Activated T-helper 2 cell treated with anti-CD3 and anti-CD28 coated beads, Interferon-gamma antibody, Interleukin-2, Interleukin-4, amounts not matched to agents 10 μg/mL and 5 μg/mL and 100 μg/mL, durations not matched to agents 14 hours and 24 hours and 36 hours (primary cell): ENCODE measurements at regions of chr5 and their contacts with region 1.

Region 1: DNA sequence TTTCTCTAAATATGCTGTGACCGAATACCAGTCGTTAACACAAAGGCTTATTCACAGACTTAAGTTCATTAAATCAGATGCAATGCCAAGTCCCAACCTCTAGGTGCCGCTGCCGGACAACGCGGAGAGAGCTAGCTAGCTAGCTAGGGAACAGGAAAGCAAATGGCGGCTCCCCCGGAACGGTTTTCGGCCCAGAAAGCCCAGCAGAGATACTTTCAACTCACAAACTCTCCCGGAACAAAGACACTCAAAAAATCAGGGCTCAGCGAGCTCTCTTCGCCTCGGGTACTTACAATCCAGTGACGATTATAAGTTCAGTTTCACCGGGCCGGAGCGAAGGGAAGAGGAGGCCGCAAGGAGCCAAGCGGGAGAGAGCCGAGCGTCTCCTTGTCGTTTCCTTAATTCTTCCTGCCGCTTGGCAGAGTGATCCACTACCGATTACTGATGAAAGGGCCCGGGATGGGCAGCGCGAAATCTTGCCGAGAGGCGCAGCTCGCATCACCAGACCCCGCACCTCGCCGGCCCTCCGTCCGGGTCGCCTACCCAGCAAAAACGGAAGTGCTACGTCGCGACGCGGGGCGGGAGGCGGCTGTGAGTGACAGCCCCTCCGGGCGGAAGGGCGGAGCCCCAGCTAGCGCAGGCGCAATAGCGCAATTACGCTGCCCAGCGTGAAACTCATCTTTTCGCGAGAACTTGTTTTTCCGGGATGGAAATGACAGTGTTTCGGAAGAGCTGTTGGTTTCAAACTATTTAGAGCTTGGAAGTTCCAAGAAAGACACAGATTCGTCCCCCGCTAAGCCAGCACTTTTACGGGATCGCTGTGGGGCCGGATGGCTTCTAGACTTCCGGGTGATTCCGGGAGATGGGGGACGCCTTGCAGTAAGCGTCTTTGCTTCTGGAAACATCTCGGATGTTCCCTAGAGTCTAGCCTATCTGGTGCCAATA is at the start of gene TAF7:
- DNase-seq: peak; percentile 91
- H3K4me3 Mint-ChIP-seq: peak within 1 kb of the TSS; percentile 94
- H3K27ac Mint-ChIP-seq: peak within 1 kb of the TSS; percentile 97
- H3K4me1 Mint-ChIP-seq: peaks cover 14% of the 10 kb centered on the region
- H3K27me3 Mint-ChIP-seq: peaks cover 1% of the 10 kb centered on the region
- total RNA-seq, gene TAF7: 67.1 and 70.5 TPM in 2 replicates

Region 2: DNA sequence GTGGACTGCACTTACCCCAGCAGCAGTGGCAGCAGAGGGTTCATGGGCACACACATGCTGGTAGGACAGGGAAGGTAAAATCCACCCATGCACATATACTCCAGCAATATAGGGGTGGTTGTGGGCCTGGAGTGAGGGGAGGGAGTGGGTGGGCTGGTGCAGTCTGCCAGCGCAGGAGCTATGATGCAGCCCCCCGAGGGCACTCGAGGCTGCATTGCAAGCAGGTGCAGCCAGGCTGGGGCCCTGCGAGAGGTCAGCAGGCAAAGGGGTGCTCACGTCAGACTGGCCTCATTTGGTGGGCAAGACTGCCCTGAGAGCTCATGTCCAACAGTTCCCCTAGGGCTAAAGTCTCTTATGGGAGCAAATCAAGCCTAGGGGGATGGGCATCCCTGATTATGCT is 566.9 kb before region 1 on chr5:
- intact Hi-C with region 1: no loop called
- DNase-seq: no peak
- H3K4me3 Mint-ChIP-seq: no peak overlapping the region
- H3K27ac Mint-ChIP-seq: no peak overlapping the region
- H3K4me1 Mint-ChIP-seq: no peaks in the 10 kb centered on the region
- H3K27me3 Mint-ChIP-seq: no peaks in the 10 kb centered on the region

Region 3: GRCh38 chr5:141250576-141250975 is 69.9 kb before region 1 on chr5:
- intact Hi-C with region 1: no loop called
- DNase-seq: no peak
- H3K4me3 Mint-ChIP-seq: no peak overlapping the region
- H3K27ac Mint-ChIP-seq: no peak overlapping the region
- H3K4me1 Mint-ChIP-seq: no peaks in the 10 kb centered on the region
- H3K27me3 Mint-ChIP-seq: no peaks in the 10 kb centered on the region

Region 4: GRCh38 chr5:141564216-141564692 is 243.8 kb after region 1 on chr5:
- intact Hi-C with region 1: loop called (anchors 2 kb)
- DNase-seq: peak; percentile 60
- H3K4me3 Mint-ChIP-seq: no peak overlapping the region
- H3K27ac Mint-ChIP-seq: peak overlapping the region; percentile 85
- H3K4me1 Mint-ChIP-seq: peaks cover 23% of the 10 kb centered on the region
- H3K27me3 Mint-ChIP-seq: no peaks in the 10 kb centered on the region

Region 5: DNA sequence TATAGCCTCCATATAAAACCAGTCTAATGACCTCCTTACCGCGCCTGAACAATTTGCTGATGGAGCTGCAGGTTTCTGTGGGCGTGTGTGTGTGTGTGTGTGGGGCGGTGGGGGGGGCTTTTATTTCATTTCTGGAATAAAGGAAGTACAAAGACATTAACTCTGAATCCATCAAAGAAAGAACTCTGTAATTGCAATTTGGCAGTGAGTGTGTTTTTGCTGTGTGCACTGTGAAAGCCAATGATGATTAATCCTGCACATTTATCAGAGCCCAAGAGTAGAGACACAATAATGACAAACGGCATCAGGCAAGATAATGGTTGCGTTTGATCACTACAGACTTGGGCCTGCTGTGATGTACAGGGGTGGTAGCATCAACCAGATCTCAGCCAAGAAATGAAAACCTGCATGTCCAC is 758.8 kb after region 1 on chr5:
- intact Hi-C with region 1: no loop called
- DNase-seq: no peak
- H3K4me3 Mint-ChIP-seq: no peak overlapping the region
- H3K27ac Mint-ChIP-seq: no peak overlapping the region
- H3K4me1 Mint-ChIP-seq: peaks cover 24% of the 10 kb centered on the region
- H3K27me3 Mint-ChIP-seq: no peaks in the 10 kb centered on the region